AG04449 (cell line): ENCODE measurements at regions of chr2 and their contacts with region 1.

Region 1: GRCh38 chr2:80073134-80073561 is 231.4 kb downstream of the LRRTM1 start:
- DNase-seq: no peak
- H3K4me3 ChIP-seq: no peak overlapping the region
- CTCF ChIP-seq: peak; percentile 61

Region 2: DNA sequence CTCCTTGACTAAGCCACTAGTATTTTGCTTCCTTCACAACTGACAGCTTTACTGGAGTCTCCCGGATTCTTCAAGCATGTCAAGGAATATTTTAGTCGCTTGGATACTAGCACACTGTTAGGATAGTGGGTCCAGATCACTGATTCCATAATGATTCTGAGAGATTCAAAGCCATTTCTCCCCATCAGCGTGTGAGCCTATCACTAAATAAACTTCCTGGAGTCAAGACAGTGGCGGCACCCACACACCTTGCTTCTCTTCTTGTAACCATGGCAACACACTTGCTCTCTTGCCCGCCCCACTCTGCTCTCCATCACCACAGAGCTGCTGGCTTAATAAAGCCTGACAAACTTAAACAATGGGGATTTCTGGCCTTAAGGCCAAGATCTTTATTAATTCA is 13.7 kb before region 1 on chr2:
- CTCF ChIA-PET with region 1: interaction called, 13 read pairs
- POLR2A ChIA-PET with region 1: no interaction called
- DNase-seq: no peak
- H3K4me3 ChIP-seq: no peak overlapping the region
- CTCF ChIP-seq: no peak

Region 3: GRCh38 chr2:80086831-80087230 is 13.7 kb after region 1 on chr2:
- CTCF ChIA-PET with region 1: interaction called, 32 read pairs
- POLR2A ChIA-PET with region 1: no interaction called
- DNase-seq: peak; percentile 77
- H3K4me3 ChIP-seq: no peak overlapping the region
- CTCF ChIP-seq: no peak

Region 4: GRCh38 chr2:80185091-80185490 is 111.9 kb after region 1 on chr2:
- CTCF ChIA-PET with region 1: no interaction called
- POLR2A ChIA-PET with region 1: no interaction called
- DNase-seq: no peak
- H3K4me3 ChIP-seq: no peak overlapping the region
- CTCF ChIP-seq: no peak

Region 5: GRCh38 chr2:80231421-80231820 is 158.3 kb after region 1 on chr2:
- CTCF ChIA-PET with region 1: interaction called, 13 read pairs
- POLR2A ChIA-PET with region 1: no interaction called
- DNase-seq: no peak
- H3K4me3 ChIP-seq: no peak overlapping the region
- CTCF ChIP-seq: no peak